T-cell (primary cell): ENCODE measurements at regions of chr11 and their contacts with region 1.

Region 1: GRCh38 chr11:118845369-118845768 is 38.3 kb upstream of the CXCR5 start:
- DNase-seq: no peak
- ATAC-seq: no peak
- H3K4me3 ChIP-seq: no peak overlapping the region
- H3K4me3 Mint-ChIP-seq: no peak overlapping the region
- H3K27ac ChIP-seq: no peak overlapping the region
- H3K27ac Mint-ChIP-seq: peak overlapping the region; percentile 25 to 39
- H3K4me1 ChIP-seq: peaks cover 0 to 7% of the 10 kb centered on the region in 2 experiments
- H3K4me1 Mint-ChIP-seq: peaks cover 16 to 25% (median 22%) of the 10 kb centered on the region in 3 donors
- H3K27me3 ChIP-seq: no peaks in the 10 kb centered on the region
- H3K27me3 Mint-ChIP-seq: no peaks in the 10 kb centered on the region

Region 2: GRCh38 chr11:118524757-118525470 is 320.5 kb before region 1 on chr11:
- CTCF ChIA-PET with region 1: no interaction called
- POLR2A ChIA-PET with region 1: interaction called in 1 of 2 experiments, 10 read pairs
- DNase-seq: no peak
- ATAC-seq: no peak
- H3K4me3 ChIP-seq: no peak overlapping the region
- H3K4me3 Mint-ChIP-seq: no peak overlapping the region
- H3K27ac ChIP-seq: no peak overlapping the region
- H3K27ac Mint-ChIP-seq: peak overlapping the region in 1 of 2 donors; percentile 60
- H3K4me1 ChIP-seq: peaks cover 0 to 13% of the 10 kb centered on the region in 2 experiments
- H3K4me1 Mint-ChIP-seq: peaks cover 20 to 33% (median 27%) of the 10 kb centered on the region in 3 donors
- H3K27me3 ChIP-seq: no peaks in the 10 kb centered on the region
- H3K27me3 Mint-ChIP-seq: no peaks in the 10 kb centered on the region

Region 3: DNA sequence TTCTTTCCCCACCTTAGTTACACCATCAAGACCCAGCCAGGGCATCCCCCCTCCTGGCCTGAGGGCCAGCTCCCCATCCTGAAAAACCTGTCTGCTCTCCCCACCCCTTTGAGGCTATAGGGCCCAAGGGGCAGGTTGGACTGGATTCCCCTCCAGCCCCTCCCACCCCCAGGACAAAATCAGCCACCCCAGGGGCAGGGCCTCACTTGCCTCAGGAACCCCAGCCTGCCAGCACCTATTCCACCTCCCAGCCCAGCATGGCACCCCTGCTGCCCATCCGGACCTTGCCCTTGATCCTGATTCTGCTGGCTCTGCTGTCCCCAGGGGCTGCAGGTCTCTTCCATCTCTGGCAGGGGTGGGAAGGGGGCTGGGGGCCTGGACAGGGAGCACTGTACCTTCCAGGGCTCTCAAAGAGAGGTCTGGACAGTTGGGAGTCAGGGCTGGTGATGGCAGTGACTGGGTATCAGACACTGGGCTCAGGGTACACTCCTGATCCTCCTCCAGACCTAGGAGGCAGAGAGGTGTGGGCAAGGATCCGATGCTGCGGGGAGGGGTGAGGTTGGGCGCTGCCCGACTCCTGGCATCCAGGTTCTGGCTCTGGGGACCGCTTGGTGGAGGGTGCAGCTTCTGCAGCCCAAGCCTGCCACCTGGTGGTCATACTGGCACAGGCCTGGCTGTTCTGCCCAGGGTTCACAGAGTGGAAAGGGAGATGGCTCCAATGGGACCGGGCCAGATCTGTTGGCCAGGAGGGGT is 110.9 kb after region 1 on chr11 and contains the start of gene UPK2:
- CTCF ChIA-PET with region 1: no interaction called
- POLR2A ChIA-PET with region 1: no interaction called
- DNase-seq: peak; percentile 67 to 93 (median 85)
- ATAC-seq: peak; percentile 96 to 99 (median 98)
- H3K4me3 ChIP-seq: no peak within 1 kb of the TSS
- H3K4me3 Mint-ChIP-seq: no peak within 1 kb of the TSS
- H3K27ac ChIP-seq: no peak within 1 kb of the TSS
- H3K27ac Mint-ChIP-seq: no peak within 1 kb of the TSS
- H3K4me1 ChIP-seq: peaks cover 0 to 10% of the 10 kb centered on the region in 2 experiments
- H3K4me1 Mint-ChIP-seq: peaks cover 5 to 11% (median 6%) of the 10 kb centered on the region in 3 donors
- H3K27me3 ChIP-seq: peaks cover 0 to 32% of the 10 kb centered on the region in 2 experiments
- H3K27me3 Mint-ChIP-seq: peaks cover 0 to 13% of the 10 kb centered on the region in 2 donors
- total RNA-seq, gene UPK2: 0.32 TPM in 1 of 5 donors, not detected in the others